Dendritic cell treated with granulocyte-macrophage colony-stimulating factor and Interleukin-4, amounts not matched to agents 40 ng/mL and 50 ng/mL, for 4 days (primary cell): ENCODE measurements at regions of chr2 and their contacts with region 1.

Region 1: DNA sequence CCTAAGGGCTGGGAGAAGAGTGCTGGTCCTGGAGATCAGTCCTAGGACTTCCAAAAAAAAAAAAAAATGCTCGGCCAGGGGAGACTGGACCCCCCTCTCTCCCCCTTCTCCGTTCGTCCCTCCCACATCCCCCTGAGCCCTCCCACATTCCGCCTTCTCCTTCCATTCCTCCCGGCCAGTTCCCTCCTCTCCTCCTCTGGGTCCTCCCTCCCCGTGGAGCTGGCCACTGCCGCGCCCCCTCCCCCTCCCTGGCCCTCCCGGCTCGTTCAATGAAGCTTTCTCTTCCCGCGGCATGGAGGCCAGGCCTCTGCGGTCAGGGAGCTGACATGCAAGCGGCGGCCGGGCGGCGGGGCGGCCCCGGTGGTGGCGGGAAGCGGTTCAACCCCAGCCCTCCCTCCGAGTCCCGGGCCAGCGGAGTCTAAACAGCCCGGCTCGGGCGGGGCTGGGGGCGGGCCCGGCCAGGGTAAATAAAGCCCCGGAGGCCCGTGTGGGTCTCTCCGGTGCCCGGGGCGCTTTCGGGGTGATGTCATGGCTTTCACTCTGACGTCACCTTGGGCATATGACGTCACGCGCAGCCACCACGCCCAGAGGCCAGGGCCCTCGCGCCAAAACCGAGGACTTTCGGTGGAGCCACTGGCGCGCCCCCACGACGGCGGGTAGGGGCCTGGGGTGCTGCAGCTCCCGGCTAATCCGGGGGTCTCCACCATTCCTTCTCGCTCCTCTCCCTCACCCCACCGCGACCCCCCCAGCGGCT is at the start of gene LOXL3:
- H3K4me3 Mint-ChIP-seq: peak within 1 kb of the TSS; percentile 97
- H3K27ac Mint-ChIP-seq: peak within 1 kb of the TSS; percentile 95
- H3K4me1 Mint-ChIP-seq: peaks cover 65% of the 10 kb centered on the region
- H3K27me3 Mint-ChIP-seq: no peaks in the 10 kb centered on the region

Region 2: GRCh38 chr2:74440378-74441169 is 113.5 kb before region 1 on chr2:
- intact Hi-C with region 1: no loop called
- H3K4me3 Mint-ChIP-seq: peak overlapping the region; percentile 62
- H3K27ac Mint-ChIP-seq: peak overlapping the region; percentile 61
- H3K4me1 Mint-ChIP-seq: peaks cover 77% of the 10 kb centered on the region
- H3K27me3 Mint-ChIP-seq: peaks cover 63% of the 10 kb centered on the region

Region 3: GRCh38 chr2:74498500-74499266 is 55.4 kb before region 1 on chr2:
- intact Hi-C with region 1: no loop called
- H3K4me3 Mint-ChIP-seq: peak overlapping the region; percentile 69
- H3K27ac Mint-ChIP-seq: peak overlapping the region; percentile 45
- H3K4me1 Mint-ChIP-seq: peaks cover 52% of the 10 kb centered on the region
- H3K27me3 Mint-ChIP-seq: peaks cover 67% of the 10 kb centered on the region

Region 4: DNA sequence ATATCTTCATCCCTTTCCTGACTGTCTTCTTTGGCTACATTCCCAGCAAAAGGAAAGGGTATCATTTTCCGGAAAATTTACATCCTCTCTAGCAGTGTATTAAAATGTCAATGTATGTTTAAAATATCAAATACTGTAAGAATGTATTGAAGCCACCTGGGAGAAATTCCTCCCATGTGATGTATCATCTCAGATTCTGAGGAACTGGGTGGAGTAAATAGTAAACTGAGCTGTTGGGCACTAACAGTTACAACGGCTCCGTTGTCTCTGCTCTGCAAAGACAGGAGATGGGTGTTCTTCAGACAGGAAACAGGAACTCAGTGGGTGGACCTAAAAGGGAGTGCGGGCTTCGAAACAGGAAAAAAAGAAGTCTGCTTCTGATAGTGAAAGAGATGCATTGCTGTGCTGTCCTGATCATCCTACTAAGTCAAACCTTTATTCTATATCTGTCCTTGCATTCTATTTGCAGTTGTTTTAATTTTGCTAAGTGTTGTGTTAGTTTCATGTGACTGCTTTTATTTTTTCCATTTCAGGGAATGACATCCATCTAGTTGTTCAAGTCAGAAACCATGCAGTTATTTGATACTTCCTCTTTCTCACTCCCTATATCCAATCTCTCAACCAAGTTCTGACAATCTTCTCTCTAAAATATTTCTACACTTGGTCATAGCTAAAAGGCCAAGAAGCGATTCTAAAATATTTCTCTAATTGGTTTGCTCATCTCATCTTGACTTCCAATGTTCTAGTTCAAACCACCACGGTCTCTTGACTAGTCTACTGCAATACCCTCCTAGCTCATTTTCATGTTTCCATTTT is 19.9 kb after region 1 on chr2:
- intact Hi-C with region 1: loop called (anchors 1 kb)
- H3K4me3 Mint-ChIP-seq: peak overlapping the region; percentile 58
- H3K27ac Mint-ChIP-seq: peak overlapping the region; percentile 90
- H3K4me1 Mint-ChIP-seq: peaks cover 61% of the 10 kb centered on the region
- H3K27me3 Mint-ChIP-seq: no peaks in the 10 kb centered on the region

Region 5: DNA sequence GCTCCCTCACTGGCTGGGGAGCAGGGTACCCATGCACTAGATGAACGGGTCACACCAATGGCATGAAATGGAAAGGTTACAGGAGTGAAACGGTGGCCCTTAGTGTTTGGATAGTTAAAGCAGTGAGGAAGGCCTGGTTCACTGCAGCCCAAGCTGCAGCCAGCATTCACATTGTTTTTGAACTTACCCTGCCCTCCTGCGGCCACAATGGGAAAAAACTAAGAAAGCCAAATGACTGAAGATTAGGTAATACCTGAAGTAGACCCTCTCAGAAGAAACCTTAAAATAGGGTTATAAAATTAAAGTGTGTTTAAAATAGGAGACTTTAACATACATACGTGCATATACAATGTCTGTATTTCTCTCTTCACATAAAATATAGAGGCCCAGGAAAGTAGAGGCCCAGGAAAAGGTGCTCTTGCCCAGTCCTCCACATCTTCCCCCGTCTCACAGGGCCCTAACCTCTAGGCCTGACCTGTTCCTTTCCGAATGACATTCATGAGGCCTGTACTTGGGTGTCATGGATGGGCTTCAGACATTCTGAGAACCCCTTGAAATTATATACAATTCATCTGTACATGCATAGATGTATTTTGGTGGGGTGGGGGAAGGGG is 33.7 kb after region 1 on chr2:
- intact Hi-C with region 1: loop called (anchors 2 kb)
- H3K4me3 Mint-ChIP-seq: no peak overlapping the region
- H3K27ac Mint-ChIP-seq: no peak overlapping the region
- H3K4me1 Mint-ChIP-seq: peaks cover 44% of the 10 kb centered on the region
- H3K27me3 Mint-ChIP-seq: peaks cover 2% of the 10 kb centered on the region

Region 6: DNA sequence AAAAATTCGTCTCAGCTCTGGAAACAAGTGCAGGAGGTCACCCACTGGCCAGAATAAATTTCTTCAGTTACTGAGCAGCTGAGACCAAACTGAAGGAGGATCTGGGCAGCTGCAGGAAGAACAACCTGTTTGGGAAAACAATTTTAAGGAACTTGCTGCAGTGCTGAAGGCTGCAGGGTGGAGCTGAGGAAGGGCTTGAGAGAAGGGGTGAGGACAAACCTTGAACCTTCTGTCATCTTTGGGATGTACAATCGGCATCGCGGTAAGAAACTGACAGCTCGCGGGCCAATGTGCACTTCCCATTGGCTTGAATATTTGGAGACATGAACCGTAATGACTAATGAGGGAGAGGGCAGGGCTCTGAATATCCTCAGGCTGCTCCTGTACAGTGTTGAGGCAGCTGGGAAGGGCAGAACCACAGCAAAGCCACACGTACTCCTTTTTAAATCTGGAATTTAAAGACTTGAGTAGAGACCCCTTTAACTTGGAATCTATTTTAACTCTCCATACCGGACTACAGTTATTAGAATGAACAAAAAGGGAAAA is 554.9 kb after region 1 on chr2:
- intact Hi-C with region 1: no loop called
- H3K4me3 Mint-ChIP-seq: no peak overlapping the region
- H3K27ac Mint-ChIP-seq: no peak overlapping the region
- H3K4me1 Mint-ChIP-seq: no peaks in the 10 kb centered on the region
- H3K27me3 Mint-ChIP-seq: peaks cover 11% of the 10 kb centered on the region